PC-3 (cell line): ENCODE measurements at regions of chr12 and their contacts with region 1.

Region 1: DNA sequence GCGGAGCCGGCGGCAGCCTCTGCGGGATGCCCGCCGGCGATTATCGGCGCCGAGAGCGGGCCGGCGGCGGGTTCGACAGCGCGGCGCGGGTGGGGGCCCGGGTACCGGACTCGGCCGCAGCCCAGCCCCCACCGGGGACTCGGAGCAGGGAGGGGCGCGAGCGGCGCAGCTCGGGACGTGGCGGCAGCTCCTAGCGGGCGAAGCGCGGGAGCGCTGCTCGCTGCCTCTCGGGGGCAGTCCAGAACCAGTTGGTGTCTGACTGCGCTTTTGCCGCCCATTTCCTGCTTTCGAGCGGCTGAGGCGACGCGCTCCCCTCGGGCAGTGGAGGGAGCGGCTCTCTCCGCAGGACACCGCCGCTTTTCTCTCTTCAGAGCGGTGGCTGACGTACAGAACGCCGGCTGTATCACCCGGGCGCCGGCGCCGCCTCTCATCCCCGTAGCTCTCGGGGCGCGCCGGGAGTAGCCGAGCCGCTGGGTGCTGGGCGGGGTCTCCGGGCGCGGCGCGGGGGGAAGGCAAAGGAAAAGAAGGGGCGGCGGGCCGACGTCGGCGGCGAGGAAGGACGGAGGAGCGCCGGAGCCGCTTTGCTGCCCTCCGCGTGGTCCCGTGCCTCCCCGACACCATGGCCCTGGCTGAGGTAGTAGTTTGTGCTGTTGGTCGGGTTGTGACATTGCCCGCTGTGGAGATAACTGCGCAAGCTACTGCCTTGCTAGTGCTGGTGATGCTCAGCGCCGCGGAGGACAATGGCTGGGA is 136.6 kb downstream of the MON2 start:
- DNase-seq: peak; percentile 89
- ATAC-seq: peak; percentile 78
- H3K4me3 ChIP-seq: peak overlapping the region; percentile 92
- H3K27ac ChIP-seq: peak overlapping the region; percentile 99
- H3K4me1 ChIP-seq: peaks cover 39% of the 10 kb centered on the region
- H3K27me3 ChIP-seq: no peaks in the 10 kb centered on the region
- CTCF ChIP-seq: peak; percentile 44

Region 2: GRCh38 chr12:62588916-62589315 is 14.3 kb before region 1 on chr12:
- CTCF ChIA-PET with region 1: no interaction called
- POLR2A ChIA-PET with region 1: no interaction called
- intact Hi-C with region 1: loop called (anchors 1 kb)
- DNase-seq: peak; percentile 58
- ATAC-seq: peak; percentile 81
- H3K4me3 ChIP-seq: no peak overlapping the region
- H3K27ac ChIP-seq: peak overlapping the region; percentile 73
- H3K4me1 ChIP-seq: peaks cover 21% of the 10 kb centered on the region
- H3K27me3 ChIP-seq: no peaks in the 10 kb centered on the region
- CTCF ChIP-seq: no peak

Region 3: DNA sequence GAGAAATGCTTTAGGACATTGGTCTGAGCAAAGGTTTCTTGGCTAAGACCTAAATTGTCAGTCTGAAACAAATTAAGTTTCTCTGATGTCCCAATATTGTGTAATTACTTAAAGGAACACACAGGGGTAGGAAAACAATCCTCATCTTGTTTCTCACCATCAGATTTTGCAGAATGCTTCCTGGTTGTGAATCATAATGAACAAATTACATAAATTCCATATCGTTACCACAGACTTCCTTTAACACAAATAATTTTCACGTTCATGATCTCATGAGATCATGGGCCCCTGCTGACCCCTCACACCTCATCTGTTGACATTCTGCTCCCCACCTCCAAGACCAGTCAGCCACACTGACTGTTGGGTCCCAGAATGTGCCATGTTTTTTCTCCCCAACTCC is 57.5 kb after region 1 on chr12:
- CTCF ChIA-PET with region 1: no interaction called
- POLR2A ChIA-PET with region 1: no interaction called
- intact Hi-C with region 1: loop called (anchors 5 kb)
- DNase-seq: peak; percentile 75
- ATAC-seq: peak; percentile 81
- H3K4me3 ChIP-seq: no peak overlapping the region
- H3K27ac ChIP-seq: peak overlapping the region; percentile 54
- H3K4me1 ChIP-seq: peaks cover 15% of the 10 kb centered on the region
- H3K27me3 ChIP-seq: no peaks in the 10 kb centered on the region
- CTCF ChIP-seq: no peak

Region 4: DNA sequence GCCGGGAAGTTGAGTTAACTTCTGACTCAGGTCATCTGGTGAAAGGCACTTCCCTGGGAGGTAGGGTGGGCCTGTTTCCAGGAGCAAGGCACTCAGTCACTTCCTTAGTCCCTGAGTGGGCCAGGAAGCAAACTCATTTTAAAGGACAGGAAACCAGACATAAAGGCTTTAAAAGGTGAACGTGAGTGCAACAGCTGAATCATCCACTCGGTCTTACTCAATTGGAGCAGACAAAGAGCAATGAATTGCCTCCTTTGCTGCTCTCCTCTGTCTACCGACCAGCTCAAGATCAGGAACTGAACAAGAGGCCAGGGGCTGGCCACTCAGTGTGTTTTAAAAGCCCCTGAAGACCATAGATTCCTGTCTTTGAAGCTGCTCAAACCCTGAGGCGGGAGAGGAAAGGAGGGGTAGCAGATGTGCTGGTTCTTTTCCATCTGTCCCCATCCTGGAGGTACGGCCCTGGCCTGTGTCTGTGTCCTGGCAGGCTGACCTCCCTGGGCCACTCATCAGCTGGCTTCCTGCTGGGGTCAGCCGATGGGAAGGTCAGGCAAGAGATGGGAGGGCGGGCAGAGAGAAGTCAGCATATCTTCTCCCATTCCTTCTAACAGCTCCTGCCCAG is 182.8 kb after region 1 on chr12:
- CTCF ChIA-PET with region 1: interaction called, 3 read pairs
- POLR2A ChIA-PET with region 1: interaction called, 16 read pairs
- intact Hi-C with region 1: loop called (anchors 2 kb)
- DNase-seq: peak; percentile 98
- ATAC-seq: peak; percentile 90
- H3K4me3 ChIP-seq: no peak overlapping the region
- H3K27ac ChIP-seq: peak overlapping the region; percentile 97
- H3K4me1 ChIP-seq: peaks cover 51% of the 10 kb centered on the region
- H3K27me3 ChIP-seq: no peaks in the 10 kb centered on the region
- CTCF ChIP-seq: no peak